Activated naive CD4-positive, alpha-beta T cell treated with anti-CD3 and anti-CD28 coated beads for 36 hours (primary cell): ENCODE measurements at regions of chr3 and their contacts with region 1.

Region 1: DNA sequence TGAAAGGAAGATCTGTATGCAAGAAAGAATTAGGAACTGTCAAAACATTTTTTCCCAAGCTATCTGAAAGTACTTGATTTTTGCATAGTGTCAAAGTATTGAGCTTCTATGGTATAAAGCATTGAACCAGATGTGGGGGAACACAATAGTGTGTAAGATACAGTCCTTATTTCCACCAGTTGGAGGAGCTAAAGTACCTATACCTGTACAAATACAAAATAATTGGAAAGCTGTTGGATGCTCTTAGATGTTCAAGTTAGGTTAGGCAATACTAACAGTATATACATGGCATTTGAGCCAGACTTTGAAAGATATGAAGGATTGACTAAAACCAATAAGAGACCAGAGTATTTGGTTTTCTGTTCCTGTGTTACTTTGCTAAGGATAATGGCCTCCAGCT is 148.3 kb downstream of the B3GALNT1 start:
- DNase-seq: no peak
- H3K4me3 Mint-ChIP-seq: no peak overlapping the region
- H3K27ac Mint-ChIP-seq: no peak overlapping the region
- H3K4me1 Mint-ChIP-seq: no peaks in the 10 kb centered on the region
- H3K27me3 Mint-ChIP-seq: no peaks in the 10 kb centered on the region

Region 2: GRCh38 chr3:160987982-160988964 is 31.5 kb after region 1 on chr3:
- CTCF ChIA-PET with region 1: no interaction called
- intact Hi-C with region 1: no loop called
- DNase-seq: no peak
- H3K4me3 Mint-ChIP-seq: no peak overlapping the region
- H3K27ac Mint-ChIP-seq: no peak overlapping the region
- H3K4me1 Mint-ChIP-seq: no peaks in the 10 kb centered on the region
- H3K27me3 Mint-ChIP-seq: no peaks in the 10 kb centered on the region

Region 3: DNA sequence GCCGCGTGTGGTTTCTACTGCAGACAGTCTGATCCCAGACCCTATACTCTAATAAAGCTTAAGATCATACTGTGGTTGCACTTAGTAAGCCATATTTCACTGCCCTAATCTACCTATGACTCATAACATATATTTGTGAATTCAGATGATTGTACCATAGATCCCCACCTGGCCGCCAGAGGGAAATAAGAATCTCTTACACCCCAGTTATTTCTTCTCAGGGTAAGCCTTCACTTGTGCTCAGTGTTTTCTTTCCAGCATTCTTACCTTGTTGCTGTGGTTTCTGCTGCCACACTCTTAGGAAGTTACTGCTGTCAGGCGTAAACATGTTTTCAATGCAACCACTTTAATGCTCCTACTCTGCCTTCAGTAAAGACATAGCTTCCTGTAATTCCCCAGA is 42.5 kb after region 1 on chr3:
- CTCF ChIA-PET with region 1: no interaction called
- intact Hi-C with region 1: no loop called
- DNase-seq: no peak
- H3K4me3 Mint-ChIP-seq: no peak overlapping the region
- H3K27ac Mint-ChIP-seq: no peak overlapping the region
- H3K4me1 Mint-ChIP-seq: peaks cover 3% of the 10 kb centered on the region
- H3K27me3 Mint-ChIP-seq: no peaks in the 10 kb centered on the region

Region 4: DNA sequence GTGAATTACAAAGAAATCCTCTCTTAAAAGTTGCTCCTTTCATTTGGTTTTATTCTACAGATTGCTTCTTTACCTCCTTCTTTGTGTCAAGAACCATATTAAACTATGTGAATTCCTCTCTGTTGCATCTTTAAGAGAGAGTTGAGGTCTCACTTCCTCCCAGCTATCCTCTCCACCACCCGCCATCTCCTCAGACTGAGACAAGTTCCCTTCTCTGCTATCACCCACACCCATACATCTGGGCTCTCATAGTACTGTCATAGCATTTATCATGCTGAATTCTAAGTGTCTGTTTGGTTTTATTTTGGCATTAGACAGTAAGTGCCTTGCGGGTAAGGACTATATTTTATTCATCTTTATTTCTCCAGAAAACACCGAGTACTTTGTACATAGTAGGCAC is 94.1 kb after region 1 on chr3:
- CTCF ChIA-PET with region 1: no interaction called
- intact Hi-C with region 1: no loop called
- DNase-seq: no peak
- H3K4me3 Mint-ChIP-seq: no peak overlapping the region
- H3K27ac Mint-ChIP-seq: no peak overlapping the region
- H3K4me1 Mint-ChIP-seq: no peaks in the 10 kb centered on the region
- H3K27me3 Mint-ChIP-seq: no peaks in the 10 kb centered on the region

Region 5: GRCh38 chr3:161203485-161204098 is 246.8 kb after region 1 on chr3:
- CTCF ChIA-PET with region 1: no interaction called
- intact Hi-C with region 1: loop called (anchors 1 kb)
- DNase-seq: no peak
- H3K4me3 Mint-ChIP-seq: no peak overlapping the region
- H3K27ac Mint-ChIP-seq: no peak overlapping the region
- H3K4me1 Mint-ChIP-seq: no peaks in the 10 kb centered on the region
- H3K27me3 Mint-ChIP-seq: peaks cover 1% of the 10 kb centered on the region